ENCODE measurements at regions of chr12 and their contacts with region 1.

Region 1: DNA sequence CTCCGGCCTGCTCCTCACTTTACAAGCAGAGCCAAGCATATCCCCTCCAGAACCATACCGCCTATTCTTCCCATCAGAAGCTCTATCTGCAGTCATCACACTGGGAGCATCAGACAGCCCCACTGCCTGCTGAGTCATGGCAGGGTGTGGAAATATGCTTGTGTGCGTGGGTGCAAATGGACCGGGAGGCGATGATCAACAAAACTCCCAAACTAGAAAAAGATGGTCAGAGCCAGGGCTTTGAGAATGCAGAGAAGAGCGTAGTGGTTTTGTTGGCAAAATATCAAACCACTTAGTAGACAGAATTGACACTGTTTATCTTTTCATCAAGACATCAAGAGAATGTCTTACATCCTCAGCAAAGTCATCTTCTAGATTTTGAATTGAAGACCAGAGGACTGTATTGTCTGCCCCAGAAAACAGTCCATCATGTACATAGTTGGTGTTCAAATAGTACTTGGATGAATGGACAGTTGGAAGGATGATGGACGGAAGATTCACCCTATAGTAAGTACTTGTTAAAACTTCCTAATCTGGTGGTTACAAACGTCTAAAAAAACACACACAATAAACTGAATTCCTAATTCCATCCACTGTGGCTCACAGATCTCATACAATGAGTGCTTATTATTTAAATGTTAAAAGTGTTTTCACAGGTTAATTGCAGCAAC is 54.9 kb downstream of the VWF start:
- DNase-seq: no peak
- H3K4me3 ChIP-seq: no peak overlapping the region
- H3K27ac ChIP-seq: no peak overlapping the region
- H3K4me1 ChIP-seq: no peaks in the 10 kb centered on the region
- H3K27me3 ChIP-seq: no peaks in the 10 kb centered on the region
- CTCF ChIP-seq: no peak
- POLR2A ChIP-seq: no peak

Region 2: GRCh38 chr12:6178981-6179761 is 109.6 kb after region 1 on chr12:
- intact Hi-C with region 1: loop called in 1 of 2 experiments (anchors 5 kb)
- DNase-seq: no peak
- H3K4me3 ChIP-seq: no peak overlapping the region
- H3K27ac ChIP-seq: peak overlapping the region in 3 of 5 donors; percentile 26 to 90 (median 71)
- H3K4me1 ChIP-seq: peaks cover 5 to 45% of the 10 kb centered on the region in 2 donors
- H3K27me3 ChIP-seq: no peaks in the 10 kb centered on the region
- CTCF ChIP-seq: no peak
- POLR2A ChIP-seq: no peak

Measured in adrenal gland (tissue), 19 donors.